Esophagus muscularis mucosa (tissue), 4 donors: ENCODE measurements at regions of chr16 and their contacts with region 1.

Region 1: DNA sequence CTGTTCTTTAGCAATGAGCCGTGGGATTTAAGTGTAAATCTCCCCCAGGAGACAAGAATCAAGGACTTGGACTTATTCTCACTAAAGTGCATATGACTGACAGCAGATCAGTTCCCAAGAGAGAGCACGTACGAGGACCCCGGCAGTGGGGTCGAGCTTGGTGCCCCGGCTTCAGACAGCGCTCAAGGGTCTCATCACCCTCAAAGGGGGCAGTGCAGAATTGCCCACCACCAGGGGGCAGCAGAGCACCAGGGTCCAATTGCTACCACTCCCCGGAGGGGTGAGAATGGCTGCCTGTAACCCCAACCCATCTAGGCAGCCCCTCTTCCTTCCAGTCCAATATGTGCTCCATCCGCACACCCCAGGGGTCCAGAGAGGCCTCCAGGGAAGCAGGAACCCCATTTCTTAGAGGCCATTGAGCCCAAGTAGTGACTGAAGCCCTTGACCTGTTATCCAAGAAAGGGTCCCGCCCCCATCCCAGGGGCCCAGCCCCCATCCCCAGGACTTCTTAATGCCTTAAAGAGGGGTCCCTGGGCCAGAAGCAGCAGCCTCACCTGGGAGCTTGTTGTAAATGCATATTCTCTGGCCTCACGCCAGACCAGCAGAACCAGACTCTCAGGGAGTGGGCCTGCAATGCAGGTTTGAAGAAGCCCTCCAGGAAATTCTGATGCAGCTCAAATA is 86.1 kb downstream of the ZDHHC7 start:
- DNase-seq: no peak
- H3K4me3 ChIP-seq: no peak overlapping the region
- H3K27ac ChIP-seq: peak overlapping the region in 3 of 4 donors; percentile 49 to 57 (median 54)
- H3K4me1 ChIP-seq: peaks cover 29 to 64% (median 61%) of the 10 kb centered on the region in 4 donors
- H3K27me3 ChIP-seq: no peaks in the 10 kb centered on the region
- CTCF ChIP-seq: peak; percentile 66 to 83 (median 79)
- EP300 ChIP-seq: no peak
- POLR2A ChIP-seq: no peak

Region 2: GRCh38 chr16:84836234-84836647 is 89.0 kb before region 1 on chr16:
- intact Hi-C with region 1: no loop called
- DNase-seq: peak; percentile 97
- H3K4me3 ChIP-seq: no peak overlapping the region
- H3K27ac ChIP-seq: peak overlapping the region; percentile 94 to 97 (median 96)
- H3K4me1 ChIP-seq: peaks cover 60 to 100% (median 94%) of the 10 kb centered on the region in 4 donors
- H3K27me3 ChIP-seq: no peaks in the 10 kb centered on the region
- CTCF ChIP-seq: no peak
- EP300 ChIP-seq: peak; percentile 99
- POLR2A ChIP-seq: no peak

Region 3: DNA sequence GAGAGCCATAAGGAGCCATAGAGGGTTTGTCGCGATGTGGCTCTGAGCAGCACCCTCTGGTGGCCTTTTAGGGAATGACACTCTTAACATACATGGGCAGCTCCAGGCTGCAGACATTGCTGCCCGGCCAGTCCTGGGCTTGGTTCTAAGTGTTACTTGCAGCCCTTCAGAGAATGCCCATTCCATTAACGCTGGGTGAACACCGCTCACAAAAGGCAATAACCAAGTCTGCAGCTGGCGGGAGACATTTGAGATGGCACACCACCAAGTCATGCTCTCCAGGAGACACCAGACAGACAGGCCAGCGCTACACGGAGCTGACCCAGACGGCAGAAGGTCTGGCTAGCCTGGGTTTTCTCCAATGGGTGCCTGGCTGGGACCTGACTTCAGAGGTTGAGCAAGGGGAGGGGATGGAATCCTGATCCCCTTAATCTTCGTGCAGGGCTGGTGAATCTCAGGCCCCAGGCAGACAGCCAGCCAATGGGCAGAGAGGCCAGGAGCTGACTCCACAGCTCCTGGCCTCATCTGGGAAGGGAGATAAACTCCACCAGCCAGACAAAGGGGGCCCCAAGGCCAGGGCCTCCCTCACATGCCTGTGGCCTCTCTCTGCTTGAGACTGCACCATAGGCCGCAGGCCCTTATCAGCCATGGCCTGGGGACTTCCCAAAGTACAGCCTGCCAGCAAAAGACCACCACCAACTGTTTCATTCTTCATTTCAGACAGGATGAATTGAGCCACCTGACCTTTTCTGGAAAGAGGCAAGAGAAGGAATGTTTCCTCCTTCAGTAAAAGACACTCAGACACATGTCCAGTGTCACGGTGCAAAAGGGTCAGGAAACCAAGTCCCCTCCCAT is 27.3 kb after region 1 on chr16:
- intact Hi-C with region 1: loop called (anchors 2 kb)
- DNase-seq: peak; percentile 95
- H3K4me3 ChIP-seq: no peak overlapping the region
- H3K27ac ChIP-seq: peak overlapping the region in 3 of 4 donors; percentile 57 to 70 (median 62)
- H3K4me1 ChIP-seq: peaks cover 9 to 24% (median 18%) of the 10 kb centered on the region in 4 donors
- H3K27me3 ChIP-seq: no peaks in the 10 kb centered on the region
- CTCF ChIP-seq: peak; percentile 85 to 93 (median 92)
- EP300 ChIP-seq: no peak
- POLR2A ChIP-seq: no peak

Region 4: DNA sequence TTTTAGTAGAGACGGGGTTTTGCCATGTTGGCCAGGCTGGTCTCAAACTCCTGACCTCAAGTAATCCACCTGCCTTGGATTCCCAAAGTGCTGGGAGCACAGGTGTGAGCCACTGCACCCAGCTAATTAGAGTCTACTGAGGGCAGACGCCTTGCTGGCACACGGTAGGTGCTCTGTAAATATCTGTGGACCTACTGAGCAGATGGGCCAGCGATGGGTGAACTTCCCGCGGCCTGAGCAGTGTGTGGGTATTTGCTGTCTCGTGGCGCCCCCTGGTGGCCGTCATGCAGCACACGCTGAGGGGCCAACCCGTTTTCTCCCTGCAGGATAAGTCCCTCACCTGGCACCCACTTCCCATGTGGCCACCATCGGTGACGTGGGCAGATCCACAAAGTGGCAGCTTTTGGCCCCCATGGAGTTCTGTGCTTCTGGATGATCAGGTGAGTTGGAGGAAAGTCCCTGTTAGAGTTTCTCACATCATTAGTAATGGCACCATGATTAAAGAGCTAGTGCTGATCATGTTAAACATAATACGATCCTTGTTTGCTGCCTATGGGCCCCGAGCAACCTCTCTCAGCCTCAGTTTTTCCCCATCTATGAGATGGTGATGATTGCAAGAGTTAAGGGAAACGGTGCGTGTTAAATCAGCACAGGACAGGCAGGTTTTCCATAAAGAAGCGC is 45.4 kb after region 1 on chr16:
- intact Hi-C with region 1: loop called (anchors 5 kb)
- DNase-seq: no peak
- H3K4me3 ChIP-seq: no peak overlapping the region
- H3K27ac ChIP-seq: peak overlapping the region in 1 of 4 donors; percentile 75
- H3K4me1 ChIP-seq: peaks cover 14 to 29% (median 21%) of the 10 kb centered on the region in 4 donors
- H3K27me3 ChIP-seq: no peaks in the 10 kb centered on the region
- CTCF ChIP-seq: peak; percentile 92 to 98 (median 94)
- EP300 ChIP-seq: no peak
- POLR2A ChIP-seq: no peak